ENCODE measurements at regions of chr15 and their contacts with region 1.

Region 1: GRCh38 chr15:35751413-35752133 is 205.6 kb upstream of the DPH6 start:
- DNase-seq: peak; percentile 51
- H3K4me3 ChIP-seq: no peak overlapping the region
- H3K27ac ChIP-seq: no peak overlapping the region
- H3K27me3 ChIP-seq: no peaks in the 10 kb centered on the region
- CTCF ChIP-seq: peak; percentile 78

Region 2: DNA sequence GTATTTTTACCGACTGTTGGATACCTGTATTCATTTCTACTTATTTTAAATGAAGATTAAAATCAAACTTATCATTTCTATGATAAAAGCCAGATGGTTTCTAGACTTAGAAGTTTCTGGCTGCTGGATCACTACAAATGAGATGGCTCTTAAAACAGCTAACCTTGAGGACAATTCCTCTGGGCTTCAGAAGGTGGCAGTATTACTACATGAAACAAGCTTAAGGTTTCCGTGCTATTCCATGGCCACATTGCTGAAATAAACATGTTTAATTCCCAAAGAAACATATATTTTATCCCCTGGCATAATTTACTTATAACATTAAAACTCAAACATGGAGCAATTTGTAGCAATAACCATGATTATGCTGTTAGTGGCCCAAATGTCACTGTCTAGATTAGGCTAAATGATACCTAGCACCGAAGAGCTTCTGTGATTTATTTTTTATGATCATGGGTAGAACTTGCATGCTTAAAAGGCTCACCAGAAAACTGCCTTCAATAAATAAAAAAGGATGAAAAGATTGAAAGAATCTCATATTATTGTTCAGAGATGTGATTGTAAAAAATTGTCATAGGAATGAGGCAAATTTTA is 462.5 kb before region 1 on chr15:
- CTCF ChIA-PET with region 1: interaction called, 23 read pairs
- POLR2A ChIA-PET with region 1: no interaction called
- DNase-seq: peak; percentile 55
- H3K4me3 ChIP-seq: no peak overlapping the region
- H3K27ac ChIP-seq: no peak overlapping the region
- H3K27me3 ChIP-seq: no peaks in the 10 kb centered on the region
- CTCF ChIP-seq: peak; percentile 87

Region 3: GRCh38 chr15:35545824-35546510 is 205.6 kb before region 1 on chr15 and contains the start of gene DPH6:
- CTCF ChIA-PET with region 1: interaction called, 16 read pairs
- POLR2A ChIA-PET with region 1: no interaction called
- DNase-seq: peak; percentile 44
- H3K4me3 ChIP-seq: peak within 1 kb of the TSS; percentile 63
- H3K27ac ChIP-seq: peak within 1 kb of the TSS; percentile 98
- H3K27me3 ChIP-seq: no peaks in the 10 kb centered on the region
- CTCF ChIP-seq: no peak
- polyA plus RNA-seq, gene DPH6: 10.6 and 11.8 TPM in 2 replicates

Region 4: DNA sequence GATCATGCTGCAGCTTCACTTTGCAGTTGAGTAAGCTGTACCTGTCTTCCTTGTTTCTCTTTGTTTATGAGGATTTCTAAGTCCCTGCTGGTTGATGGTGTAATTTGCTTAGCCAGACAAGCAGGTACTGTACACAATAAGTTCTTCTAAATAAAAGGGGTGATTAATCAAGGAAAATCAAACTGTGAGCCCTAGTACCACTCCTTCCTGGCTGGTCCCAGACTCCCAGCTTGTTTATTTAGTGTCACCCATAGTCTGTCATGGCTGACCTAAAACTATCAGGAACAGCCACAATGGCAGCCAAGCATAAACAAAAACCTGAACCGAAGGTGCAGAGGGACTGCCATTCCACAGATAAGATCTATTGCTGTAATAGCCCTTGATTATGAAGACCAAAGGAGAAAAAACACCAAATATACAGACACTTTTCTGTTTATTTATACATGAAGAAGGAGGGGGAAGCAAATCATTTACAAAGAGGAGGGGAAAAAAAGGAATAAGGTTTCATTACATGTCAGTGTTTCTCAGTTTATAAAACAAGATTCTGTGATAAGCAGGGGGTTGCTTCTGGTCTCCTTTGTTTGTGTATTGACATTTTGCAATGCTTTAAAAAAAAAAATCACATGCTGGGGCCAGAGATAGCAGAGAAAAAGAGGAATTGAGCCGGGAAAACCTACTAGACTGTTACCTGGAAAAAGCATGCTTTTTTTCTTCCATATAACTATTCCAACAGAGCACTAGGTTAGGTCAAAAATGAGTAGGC is 23.2 kb before region 1 on chr15:
- CTCF ChIA-PET with region 1: interaction called, 14 read pairs
- POLR2A ChIA-PET with region 1: no interaction called
- DNase-seq: no peak
- H3K4me3 ChIP-seq: no peak overlapping the region
- H3K27ac ChIP-seq: no peak overlapping the region
- H3K27me3 ChIP-seq: no peaks in the 10 kb centered on the region
- CTCF ChIP-seq: no peak

Region 5: DNA sequence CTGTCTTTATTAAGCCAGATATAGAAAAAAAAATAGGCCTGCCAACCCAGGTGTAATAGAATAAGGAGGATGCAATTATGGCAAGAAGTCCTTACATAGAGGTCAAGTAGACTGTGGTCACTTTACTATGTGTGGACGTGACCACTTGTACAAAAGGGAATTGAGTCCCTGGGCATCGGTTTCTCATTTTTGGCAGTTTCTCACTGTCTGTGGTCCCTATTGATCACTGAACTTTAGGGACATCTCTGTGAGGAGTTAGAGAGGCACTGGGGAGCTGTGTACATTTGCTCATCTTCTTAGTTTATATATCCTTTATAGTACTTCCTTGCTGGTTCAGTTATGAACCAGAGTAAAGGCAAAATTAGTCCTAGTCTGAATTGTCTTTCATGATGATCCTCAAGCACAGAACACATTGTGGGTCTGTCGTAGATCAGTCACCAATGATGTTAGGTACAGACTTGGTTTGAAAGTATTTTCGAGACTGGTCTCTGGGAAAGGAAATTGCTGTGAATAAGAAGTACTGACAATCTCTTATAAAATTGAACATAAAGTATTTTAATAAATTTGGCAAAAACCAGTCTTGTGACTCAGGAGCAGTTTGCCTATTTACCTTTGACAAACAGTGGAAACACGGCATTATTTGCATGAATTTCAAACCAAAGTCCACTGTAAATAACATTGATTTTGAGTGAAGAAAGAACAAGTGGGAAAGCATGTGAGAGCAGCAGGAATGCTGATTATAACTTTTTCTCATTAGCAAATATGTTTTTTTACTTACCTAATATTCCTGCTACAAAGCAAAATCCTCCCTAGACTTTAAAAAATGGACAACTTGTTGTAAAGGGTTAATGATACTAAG is 13.3 kb after region 1 on chr15:
- CTCF ChIA-PET with region 1: interaction called, 69 read pairs
- POLR2A ChIA-PET with region 1: no interaction called
- DNase-seq: no peak
- H3K4me3 ChIP-seq: no peak overlapping the region
- H3K27ac ChIP-seq: no peak overlapping the region
- H3K27me3 ChIP-seq: no peaks in the 10 kb centered on the region
- CTCF ChIP-seq: no peak

Measured in AG04450 (cell line).